CD4-positive, alpha-beta memory T cell (primary cell): ENCODE measurements at regions of chr19 and their contacts with region 1.

Region 1: DNA sequence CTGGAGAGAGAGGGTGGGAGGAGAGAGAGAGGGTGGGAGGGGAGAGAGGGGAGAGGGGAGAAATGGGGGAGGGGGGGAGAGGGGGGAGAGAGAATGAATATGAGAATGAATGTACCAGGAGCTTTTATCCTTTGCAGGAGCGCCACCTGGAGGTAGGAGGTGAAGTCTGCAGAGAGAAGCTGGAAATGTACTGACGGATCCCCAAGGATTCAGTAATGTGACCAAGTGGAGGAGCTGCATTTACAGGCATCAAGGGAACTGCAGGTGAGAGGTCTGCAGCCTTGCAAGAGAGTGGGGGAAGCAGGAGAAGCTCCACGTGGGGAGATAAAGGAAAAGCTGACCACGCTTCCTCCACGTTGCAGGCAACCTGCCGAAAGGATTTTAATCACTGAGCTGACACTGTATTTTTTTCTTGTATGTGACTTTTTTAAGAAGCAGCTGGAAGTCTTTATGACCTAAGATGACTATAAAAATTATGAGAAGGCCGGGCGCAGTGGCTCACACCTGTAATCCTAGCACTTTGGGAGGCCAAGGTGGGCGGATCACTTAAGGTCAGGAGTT is 33.7 kb downstream of the VSTM1 start:
- DNase-seq: peak; percentile 28 to 47 (median 40)
- H3K4me3 ChIP-seq: no peak overlapping the region
- H3K4me3 Mint-ChIP-seq: no peak overlapping the region
- H3K27ac ChIP-seq: no peak overlapping the region
- H3K27ac Mint-ChIP-seq: no peak overlapping the region
- H3K4me1 ChIP-seq: no peaks in the 10 kb centered on the region
- H3K4me1 Mint-ChIP-seq: peaks cover 0 to 4% (median under 1%) of the 10 kb centered on the region in 4 donors
- H3K27me3 ChIP-seq: no peaks in the 10 kb centered on the region
- H3K27me3 Mint-ChIP-seq: peaks cover 17 to 22% of the 10 kb centered on the region in 2 donors

Region 2: GRCh38 chr19:53792721-53793433 is 237.1 kb before region 1 on chr19:
- CTCF ChIA-PET with region 1: interaction called, 97 read pairs
- POLR2A ChIA-PET with region 1: no interaction called
- intact Hi-C with region 1: no loop called
- DNase-seq: peak; percentile 67 to 74 (median 71)
- H3K4me3 ChIP-seq: no peak overlapping the region
- H3K4me3 Mint-ChIP-seq: no peak overlapping the region
- H3K27ac ChIP-seq: no peak overlapping the region
- H3K27ac Mint-ChIP-seq: no peak overlapping the region
- H3K4me1 ChIP-seq: no peaks in the 10 kb centered on the region
- H3K4me1 Mint-ChIP-seq: peaks cover 0 to 5% (median 3%) of the 10 kb centered on the region in 4 donors
- H3K27me3 ChIP-seq: no peaks in the 10 kb centered on the region
- H3K27me3 Mint-ChIP-seq: peaks cover 2 to 4% of the 10 kb centered on the region in 2 donors

Region 3: GRCh38 chr19:53906211-53907192 is 123.5 kb before region 1 on chr19:
- CTCF ChIA-PET with region 1: no interaction called
- POLR2A ChIA-PET with region 1: no interaction called
- intact Hi-C with region 1: loop called (anchors 10 kb)
- DNase-seq: peak; percentile 50 to 66 (median 56)
- H3K4me3 ChIP-seq: no peak overlapping the region
- H3K4me3 Mint-ChIP-seq: peak overlapping the region in 6 of 8 donors; percentile 27 to 41 (median 34)
- H3K27ac ChIP-seq: no peak overlapping the region
- H3K27ac Mint-ChIP-seq: peak overlapping the region in 1 of 7 donors; percentile 83
- H3K4me1 ChIP-seq: peaks cover 16% of the 10 kb centered on the region
- H3K4me1 Mint-ChIP-seq: peaks cover 19 to 44% (median 25%) of the 10 kb centered on the region in 4 donors
- H3K27me3 ChIP-seq: peaks cover 35% of the 10 kb centered on the region
- H3K27me3 Mint-ChIP-seq: peaks cover 46 to 60% of the 10 kb centered on the region in 2 donors